WTC11 (cell line): ENCODE measurements at regions of chr17 and their contacts with region 1.

Region 1: GRCh38 chr17:75927286-75927922 is 13.4 kb downstream of the FBF1 start:
- DNase-seq: peak; percentile 63
- ATAC-seq: peak; percentile 91
- H3K4me3 Mint-ChIP-seq: no peak overlapping the region
- H3K27ac Mint-ChIP-seq: no peak overlapping the region
- H3K4me1 Mint-ChIP-seq: no peaks in the 10 kb centered on the region
- H3K27me3 Mint-ChIP-seq: no peaks in the 10 kb centered on the region
- CTCF ChIP-seq: peak; percentile 47; the same call in 1 of the 2 replicates

Region 2: DNA sequence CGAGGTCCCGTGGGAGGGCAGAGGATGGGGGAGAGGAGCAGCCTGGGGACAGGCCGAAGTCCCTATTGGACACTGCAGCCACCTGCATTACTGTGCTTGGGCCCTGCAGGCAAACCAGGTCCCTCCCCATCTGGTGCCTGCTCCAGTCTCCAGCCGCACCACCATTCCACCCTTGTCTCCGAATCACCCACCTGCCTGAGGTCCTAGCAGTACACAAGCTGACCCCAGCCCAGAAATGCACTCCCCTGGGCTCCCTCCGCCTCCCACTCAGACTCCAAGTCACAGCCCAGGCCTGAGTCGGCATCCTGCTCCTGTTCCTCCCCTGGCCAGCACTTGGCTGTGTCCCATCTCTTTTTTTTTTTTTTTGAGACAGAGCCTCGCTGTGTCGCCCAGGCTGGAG is 89.5 kb before region 1 on chr17:
- CTCF ChIA-PET with region 1: no interaction called
- POLR2A ChIA-PET with region 1: no interaction called
- DNase-seq: no peak
- ATAC-seq: no peak
- H3K4me3 Mint-ChIP-seq: no peak overlapping the region
- H3K27ac Mint-ChIP-seq: no peak overlapping the region
- H3K4me1 Mint-ChIP-seq: peaks cover 13% of the 10 kb centered on the region
- H3K27me3 Mint-ChIP-seq: no peaks in the 10 kb centered on the region
- CTCF ChIP-seq: no peak

Region 3: DNA sequence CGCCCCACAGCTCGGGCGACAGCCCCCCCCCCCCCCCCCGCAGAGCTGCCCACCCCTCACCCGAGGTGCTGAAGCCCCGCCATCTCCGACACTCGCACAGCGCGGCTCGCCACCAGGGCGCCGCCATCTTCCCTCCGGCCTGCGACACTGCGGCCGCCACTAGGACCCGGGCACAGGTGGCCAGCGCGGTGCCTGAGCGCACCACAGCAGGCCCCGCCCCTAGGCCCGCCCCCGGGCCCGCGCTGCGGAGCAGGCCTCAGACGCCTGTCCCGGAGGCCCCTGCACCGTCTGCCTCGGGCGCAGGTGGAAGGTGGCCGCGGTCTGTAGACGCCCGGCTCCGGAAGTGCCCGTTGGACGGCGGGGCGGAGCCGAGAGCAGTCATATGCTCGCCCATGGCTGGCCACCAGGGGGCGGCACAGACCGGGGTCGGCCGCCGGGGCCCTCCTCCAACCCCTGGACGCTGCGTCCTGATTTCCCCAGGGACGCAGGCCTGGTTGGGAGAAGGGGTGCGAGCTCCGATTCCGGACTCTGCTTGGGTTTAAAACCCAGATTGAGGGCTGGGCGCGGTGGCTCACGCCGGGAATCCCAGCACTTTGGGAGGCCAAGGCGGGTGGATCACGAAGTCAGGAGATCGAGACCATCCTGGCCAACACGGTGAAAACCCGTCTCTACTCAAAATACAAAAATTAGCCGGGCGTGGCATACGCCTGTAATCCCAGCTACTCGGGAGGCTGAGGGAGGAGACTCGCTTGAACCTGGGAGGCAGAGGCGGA is 22.5 kb before region 1 on chr17 and contains the start of gene MRPL38:
- CTCF ChIA-PET with region 1: interaction called, 42 read pairs
- POLR2A ChIA-PET with region 1: interaction called, 3 read pairs
- DNase-seq: peak; percentile 96
- ATAC-seq: peak; percentile 98
- H3K4me3 Mint-ChIP-seq: peak within 1 kb of the TSS; percentile 98
- H3K27ac Mint-ChIP-seq: peak within 1 kb of the TSS; percentile 95
- H3K4me1 Mint-ChIP-seq: peaks cover 3% of the 10 kb centered on the region; the same call in 1 of the 2 replicates
- H3K27me3 Mint-ChIP-seq: no peaks in the 10 kb centered on the region
- CTCF ChIP-seq: peak; percentile 97
- total RNA-seq, gene MRPL38: 107 to 146 TPM (median 116 TPM) in 3 replicates